ENCODE measurements at regions of chr22 and their contacts with region 1.

Region 1: DNA sequence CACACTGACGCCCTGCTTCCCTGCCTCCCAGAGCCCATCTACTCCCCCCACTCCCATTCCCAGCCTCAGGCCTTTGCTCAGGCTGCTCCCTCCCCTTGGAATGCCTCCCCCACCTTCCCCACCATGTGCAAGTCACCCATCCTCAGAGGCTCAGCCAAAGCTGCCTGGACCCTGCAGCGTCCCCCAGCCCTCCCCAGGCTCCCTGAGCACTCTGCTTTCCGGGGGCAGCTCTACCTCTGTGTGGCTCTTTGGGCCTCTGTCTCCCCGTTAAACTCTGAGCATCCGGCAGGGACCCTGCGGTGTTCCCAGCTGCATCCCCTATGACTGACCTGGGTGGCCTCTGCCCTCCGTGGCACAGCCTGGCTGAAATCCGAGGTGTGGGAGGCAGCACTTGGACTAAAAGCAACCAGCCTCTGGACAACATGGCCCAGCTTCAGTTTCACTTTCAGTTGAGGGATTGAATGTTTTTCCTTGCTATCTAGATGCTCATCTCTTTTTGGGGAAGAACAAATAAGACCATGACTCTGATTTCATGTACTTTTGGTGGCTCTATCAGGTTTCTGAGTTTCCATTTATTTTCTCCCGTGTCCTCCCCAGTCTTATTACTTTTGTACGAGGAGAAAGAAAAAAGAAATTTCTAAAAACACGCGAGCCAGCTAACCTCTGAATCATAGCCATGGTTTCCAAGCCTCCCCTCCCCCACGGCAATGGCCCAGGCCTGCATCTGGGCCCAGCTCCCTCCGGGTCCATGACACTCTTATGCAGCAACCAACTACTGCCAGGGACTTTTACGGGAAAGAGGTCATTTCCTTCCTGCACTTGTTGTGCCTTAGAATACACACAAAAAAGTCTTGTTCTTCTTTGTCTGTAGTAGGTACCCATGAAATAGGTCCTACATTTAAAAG is 3.8 kb downstream of the APOL3 start:
- DNase-seq: peak; percentile 88
- H3K4me3 Mint-ChIP-seq: peak overlapping the region; percentile 90
- H3K27ac Mint-ChIP-seq: peak overlapping the region; percentile 96
- H3K4me1 Mint-ChIP-seq: peaks cover 92% of the 10 kb centered on the region
- H3K27me3 Mint-ChIP-seq: no peaks in the 10 kb centered on the region

Region 2: GRCh38 chr22:36136475-36136874 is 20.3 kb before region 1 on chr22:
- CTCF ChIA-PET with region 1: interaction called, 4 read pairs
- POLR2A ChIA-PET with region 1: no interaction called
- intact Hi-C with region 1: loop called (anchors 1 kb)
- DNase-seq: no peak
- H3K4me3 Mint-ChIP-seq: no peak overlapping the region
- H3K27ac Mint-ChIP-seq: no peak overlapping the region
- H3K4me1 Mint-ChIP-seq: peaks cover 21% of the 10 kb centered on the region
- H3K27me3 Mint-ChIP-seq: no peaks in the 10 kb centered on the region

Region 3: DNA sequence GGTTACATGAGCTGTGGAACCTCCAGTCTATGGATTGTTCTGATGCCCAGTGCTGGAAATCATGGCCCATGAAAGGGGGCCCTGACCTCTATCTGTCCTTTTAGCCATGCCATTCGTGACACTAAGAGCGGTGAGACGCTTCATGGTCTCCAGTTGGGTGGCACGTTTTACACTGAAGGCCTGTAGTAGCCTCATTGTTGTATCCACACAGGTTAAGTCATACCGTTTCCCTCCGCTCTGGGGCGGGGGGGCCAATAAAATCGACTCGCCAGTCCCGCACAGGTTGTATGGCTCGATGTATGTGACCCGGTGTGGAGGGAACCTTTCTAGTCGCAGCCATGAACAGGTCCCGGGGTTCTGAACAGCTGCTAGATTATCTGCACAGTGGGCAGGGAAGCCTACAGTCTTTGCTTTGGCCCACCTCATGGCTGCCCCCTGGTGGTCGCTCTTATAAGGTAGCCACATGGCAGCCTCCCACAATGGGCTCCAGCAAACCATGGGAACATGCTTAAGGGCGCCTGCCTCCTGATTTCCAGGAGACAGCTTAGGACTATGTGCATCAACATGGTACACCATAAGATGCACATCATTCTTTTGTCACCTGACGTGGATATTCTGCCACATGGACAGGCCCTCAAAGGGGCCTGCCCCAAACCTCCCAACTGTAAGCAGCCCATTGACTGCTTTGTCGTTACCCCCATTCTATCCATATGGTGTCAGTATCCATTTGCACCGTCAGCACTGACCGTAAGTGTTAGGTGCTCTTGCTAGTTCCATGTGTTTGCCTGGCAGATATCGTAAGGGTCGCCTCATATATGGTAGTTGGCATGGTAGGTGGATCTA is 23.5 kb after region 1 on chr22:
- CTCF ChIA-PET with region 1: interaction called, 174 read pairs
- POLR2A ChIA-PET with region 1: no interaction called
- intact Hi-C with region 1: no loop called
- DNase-seq: peak; percentile 89
- H3K4me3 Mint-ChIP-seq: no peak overlapping the region
- H3K27ac Mint-ChIP-seq: no peak overlapping the region
- H3K4me1 Mint-ChIP-seq: peaks cover 6% of the 10 kb centered on the region
- H3K27me3 Mint-ChIP-seq: no peaks in the 10 kb centered on the region

Region 4: GRCh38 chr22:36194971-36195370 is 38.2 kb after region 1 on chr22:
- CTCF ChIA-PET with region 1: no interaction called
- POLR2A ChIA-PET with region 1: no interaction called
- intact Hi-C with region 1: loop called (anchors 5 kb)
- DNase-seq: peak; percentile 63
- H3K4me3 Mint-ChIP-seq: no peak overlapping the region
- H3K27ac Mint-ChIP-seq: no peak overlapping the region
- H3K4me1 Mint-ChIP-seq: peaks cover 24% of the 10 kb centered on the region
- H3K27me3 Mint-ChIP-seq: no peaks in the 10 kb centered on the region

Region 5: DNA sequence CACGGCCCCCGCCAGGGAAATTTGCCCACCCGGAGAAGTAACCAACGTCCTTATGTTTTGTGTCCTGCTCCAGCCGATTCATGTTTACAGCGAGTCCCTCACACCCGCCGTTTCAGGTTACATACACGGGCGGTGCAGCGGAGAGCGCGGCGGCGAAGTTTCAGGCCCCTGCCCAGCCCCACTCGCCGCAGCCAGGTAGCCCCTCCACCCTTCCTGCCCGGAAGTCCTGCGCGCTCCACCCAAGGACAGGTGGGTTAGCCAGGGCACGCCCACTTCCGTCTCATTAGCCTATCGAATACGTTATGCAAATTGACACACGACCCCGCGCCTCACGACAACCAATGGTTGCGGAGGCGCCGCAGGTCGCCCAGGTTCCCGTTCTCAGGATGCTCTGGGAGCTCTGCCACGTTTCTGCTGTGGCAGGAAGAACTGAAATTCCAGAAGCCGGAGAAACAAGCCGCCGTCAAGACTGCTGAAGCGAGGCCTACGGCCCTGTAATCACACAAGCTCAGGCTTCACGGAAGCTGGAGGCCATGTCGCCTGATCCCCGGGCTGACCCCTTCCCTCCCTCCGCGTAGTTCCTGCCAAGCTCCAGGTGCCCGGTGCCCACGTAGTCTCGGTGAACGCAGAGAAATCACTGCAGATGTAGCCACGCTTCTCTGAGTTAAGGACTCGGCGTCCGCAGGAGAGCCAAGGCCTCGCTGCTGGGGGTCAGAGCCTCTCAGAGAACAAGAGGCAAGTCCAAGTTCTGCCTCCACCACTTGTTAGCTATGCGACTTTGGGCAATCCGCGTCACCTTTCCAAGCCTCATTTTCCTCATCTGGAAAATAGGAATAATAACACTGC is 253.4 kb after region 1 on chr22:
- CTCF ChIA-PET with region 1: no interaction called
- POLR2A ChIA-PET with region 1: no interaction called
- intact Hi-C with region 1: loop called (anchors 10 kb)
- DNase-seq: peak; percentile 83
- H3K4me3 Mint-ChIP-seq: peak overlapping the region; percentile 76
- H3K27ac Mint-ChIP-seq: peak overlapping the region; percentile 66
- H3K4me1 Mint-ChIP-seq: peaks cover 37% of the 10 kb centered on the region
- H3K27me3 Mint-ChIP-seq: no peaks in the 10 kb centered on the region

Region 6: DNA sequence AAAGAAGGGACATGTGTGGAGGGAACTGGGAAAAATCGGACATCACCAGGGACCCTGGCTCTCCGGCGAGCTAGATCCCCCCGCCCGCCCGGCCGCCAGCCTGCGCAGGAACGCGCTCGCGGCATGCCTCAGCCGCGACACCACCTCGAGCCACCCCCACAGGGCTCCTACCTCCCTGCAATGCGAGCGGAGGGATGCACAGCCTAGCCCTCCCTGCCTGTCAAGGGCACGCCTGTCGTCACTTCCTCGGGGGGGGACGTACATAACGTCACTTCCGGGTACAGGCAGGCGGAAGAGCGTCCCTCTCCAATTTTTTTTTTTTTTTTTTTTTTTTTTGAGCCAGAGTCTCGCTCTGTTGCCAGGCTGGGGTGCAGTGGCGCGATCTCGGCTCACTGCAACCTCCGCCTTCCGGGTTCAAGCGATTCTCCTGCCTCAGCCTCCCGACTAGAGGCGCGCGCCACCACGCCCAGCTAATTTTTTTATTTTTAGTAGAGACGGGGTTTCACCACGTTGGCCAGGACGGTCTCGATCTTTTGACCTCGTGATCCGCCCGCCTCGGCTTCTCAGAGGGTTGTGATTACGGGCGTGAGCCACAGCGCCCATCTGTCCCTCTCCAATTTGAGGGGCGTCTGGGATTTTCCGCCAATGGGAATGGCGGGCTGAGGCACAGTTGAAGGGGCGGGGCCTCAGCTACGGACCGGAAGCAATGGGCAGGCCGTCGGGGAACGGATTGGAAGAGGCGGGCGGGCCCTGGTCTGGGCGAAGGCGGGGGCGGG is 324.8 kb after region 1 on chr22 and contains the start of gene TXN2:
- CTCF ChIA-PET with region 1: interaction called, 6 read pairs
- POLR2A ChIA-PET with region 1: no interaction called
- intact Hi-C with region 1: loop called (anchors 10 kb)
- DNase-seq: peak; percentile 96
- H3K4me3 Mint-ChIP-seq: peak within 1 kb of the TSS; percentile 100
- H3K27ac Mint-ChIP-seq: peak within 1 kb of the TSS; percentile 96
- H3K4me1 Mint-ChIP-seq: peaks cover 15% of the 10 kb centered on the region
- H3K27me3 Mint-ChIP-seq: no peaks in the 10 kb centered on the region
- total RNA-seq, gene TXN2: 94.3 to 97.0 TPM